ENCODE measurements at regions of chr11 and their contacts with region 1.

Region 1: DNA sequence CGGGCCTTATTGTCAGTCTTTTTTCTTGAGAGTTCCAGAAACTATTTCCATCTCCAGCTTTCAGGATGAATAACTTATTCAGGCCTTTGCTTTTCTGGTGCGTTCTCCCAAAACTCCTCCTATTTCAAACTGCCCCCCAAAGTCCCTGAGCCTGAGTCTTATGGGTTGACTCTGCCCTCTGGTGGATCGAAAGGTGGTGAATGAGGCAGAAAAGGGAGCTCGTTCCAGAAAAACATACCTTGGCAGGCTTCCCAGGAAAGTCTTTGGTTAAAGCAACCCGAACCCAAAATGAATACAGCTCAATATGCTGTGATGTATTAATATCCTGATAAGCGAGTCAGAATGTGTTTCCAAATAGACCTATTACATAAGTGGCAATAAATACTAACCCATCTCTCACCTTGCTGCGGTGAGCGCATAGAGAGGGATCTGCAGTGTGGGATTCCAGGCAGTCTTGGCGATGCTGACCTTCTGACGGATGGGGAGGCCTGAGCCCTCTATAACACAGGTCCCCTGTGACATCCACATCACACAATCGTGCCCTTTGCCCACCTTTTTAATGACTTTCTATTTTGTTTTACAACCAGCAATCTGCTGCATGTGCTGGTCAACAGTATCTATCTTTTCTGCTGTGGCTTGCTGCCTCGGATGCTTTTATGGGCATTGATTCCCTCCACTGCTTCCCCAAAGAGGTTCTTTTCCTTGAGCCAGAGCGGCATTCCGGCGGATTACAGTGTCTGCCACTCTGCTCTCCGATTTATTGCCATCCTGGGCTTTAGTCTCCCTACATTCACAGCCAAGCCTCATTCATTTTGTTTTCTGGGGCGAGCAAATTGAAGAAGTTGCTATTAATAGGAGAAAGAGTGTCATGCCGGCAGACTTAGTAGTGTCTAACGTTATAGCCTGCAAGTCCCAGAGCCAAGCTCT is 756.8 kb downstream of the NTM start:
- DNase-seq: peak; percentile 67
- H3K4me3 ChIP-seq: peak overlapping the region in 2 of 3 experiments; percentile 34 to 36
- H3K27ac ChIP-seq: peak overlapping the region; percentile 48
- H3K4me1 ChIP-seq: peaks cover 29% of the 10 kb centered on the region
- H3K27me3 ChIP-seq: no peaks in the 10 kb centered on the region
- CTCF ChIP-seq: peak; percentile 62 to 79

Region 2: GRCh38 chr11:131465746-131466145 is 661.5 kb before region 1 on chr11:
- CTCF ChIA-PET with region 1: no interaction called
- dilution Hi-C with region 1: no loop called
- in situ Hi-C with region 1: no loop called
- intact Hi-C with region 1: no loop called
- DNase-seq: no peak
- H3K4me3 ChIP-seq: no peak overlapping the region
- H3K27ac ChIP-seq: no peak overlapping the region
- H3K4me1 ChIP-seq: no peaks in the 10 kb centered on the region
- H3K27me3 ChIP-seq: no peaks in the 10 kb centered on the region
- CTCF ChIP-seq: no peak

Region 3: DNA sequence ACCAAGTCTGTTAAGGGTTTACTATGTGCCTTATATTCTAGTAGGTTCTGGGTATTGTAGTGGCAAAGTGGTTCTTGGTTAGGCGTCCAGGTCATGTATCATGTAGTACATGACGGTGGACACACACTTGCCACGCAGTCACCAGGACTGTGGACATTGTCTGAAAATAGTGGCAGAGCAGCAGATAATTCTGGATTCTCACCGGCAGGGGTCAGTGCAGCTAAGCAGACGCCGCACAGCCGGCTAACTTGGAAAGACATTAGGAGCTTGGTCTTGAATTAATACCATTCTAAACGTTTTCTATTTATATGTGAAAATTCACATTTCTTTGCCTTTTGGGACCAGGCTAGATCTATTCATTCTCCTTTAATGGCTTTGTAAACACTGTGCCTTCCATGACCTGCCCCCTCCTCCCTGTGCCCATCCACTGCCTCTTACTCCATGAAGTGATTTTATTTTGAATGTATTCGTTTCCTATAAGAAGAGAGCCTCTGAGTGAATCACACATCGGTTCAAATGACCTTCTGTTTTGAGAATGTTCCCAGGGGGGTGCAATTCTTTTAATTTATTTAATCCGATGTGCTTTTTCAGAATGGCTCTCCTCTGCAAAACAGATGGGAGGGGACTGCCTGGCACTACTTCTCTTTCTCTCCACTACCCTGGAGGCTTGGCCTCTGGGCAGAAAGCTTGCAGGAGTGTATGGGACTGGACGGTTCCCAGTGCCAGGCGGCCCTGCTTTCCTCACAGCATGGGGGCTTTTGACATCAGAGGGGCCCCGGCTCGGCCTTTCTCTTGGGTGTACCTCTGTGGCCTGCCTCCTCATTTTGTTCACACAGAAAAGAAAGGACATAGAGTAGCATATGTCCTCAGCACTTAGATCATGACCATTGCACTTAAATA is 378.8 kb before region 1 on chr11:
- CTCF ChIA-PET with region 1: interaction called, 9 read pairs
- dilution Hi-C with region 1: no loop called
- in situ Hi-C with region 1: no loop called
- intact Hi-C with region 1: loop called (anchors 1 kb)
- DNase-seq: peak; percentile 42
- H3K4me3 ChIP-seq: no peak overlapping the region
- H3K27ac ChIP-seq: no peak overlapping the region
- H3K4me1 ChIP-seq: peaks cover 6% of the 10 kb centered on the region
- H3K27me3 ChIP-seq: no peaks in the 10 kb centered on the region
- CTCF ChIP-seq: peak; percentile 85 to 92

Region 4: GRCh38 chr11:131759140-131759539 is 368.1 kb before region 1 on chr11:
- CTCF ChIA-PET with region 1: no interaction called
- dilution Hi-C with region 1: no loop called
- in situ Hi-C with region 1: no loop called
- intact Hi-C with region 1: no loop called
- DNase-seq: no peak
- H3K4me3 ChIP-seq: no peak overlapping the region
- H3K27ac ChIP-seq: no peak overlapping the region
- H3K4me1 ChIP-seq: no peaks in the 10 kb centered on the region
- H3K27me3 ChIP-seq: no peaks in the 10 kb centered on the region
- CTCF ChIP-seq: no peak

Region 5: DNA sequence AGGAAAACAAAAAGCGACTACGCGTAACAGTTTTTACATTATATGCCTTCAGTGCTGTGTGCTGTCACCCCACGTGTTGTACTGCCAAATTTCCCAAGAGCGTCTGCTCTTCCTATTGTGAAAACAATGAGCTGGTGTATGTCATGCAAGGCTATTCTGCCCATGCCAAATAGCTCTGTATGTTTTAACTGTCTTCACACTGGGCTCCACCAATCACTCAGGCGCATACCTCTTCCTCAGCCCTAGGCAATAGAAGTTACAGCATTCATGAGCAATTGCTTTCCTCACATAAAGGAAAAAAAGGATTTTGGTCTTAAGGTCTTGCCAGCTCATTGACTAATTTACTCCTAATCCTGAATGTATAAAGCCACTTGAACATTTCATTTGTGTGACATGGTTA is 150.0 kb before region 1 on chr11:
- CTCF ChIA-PET with region 1: interaction called, 5 read pairs
- dilution Hi-C with region 1: no loop called
- in situ Hi-C with region 1: no loop called
- intact Hi-C with region 1: loop called (anchors 1 kb)
- DNase-seq: peak; percentile 95
- H3K4me3 ChIP-seq: peak overlapping the region in 2 of 3 experiments; percentile 21 to 26
- H3K27ac ChIP-seq: peak overlapping the region; percentile 95
- H3K4me1 ChIP-seq: peaks cover 29% of the 10 kb centered on the region
- H3K27me3 ChIP-seq: no peaks in the 10 kb centered on the region
- CTCF ChIP-seq: no peak

Region 6: DNA sequence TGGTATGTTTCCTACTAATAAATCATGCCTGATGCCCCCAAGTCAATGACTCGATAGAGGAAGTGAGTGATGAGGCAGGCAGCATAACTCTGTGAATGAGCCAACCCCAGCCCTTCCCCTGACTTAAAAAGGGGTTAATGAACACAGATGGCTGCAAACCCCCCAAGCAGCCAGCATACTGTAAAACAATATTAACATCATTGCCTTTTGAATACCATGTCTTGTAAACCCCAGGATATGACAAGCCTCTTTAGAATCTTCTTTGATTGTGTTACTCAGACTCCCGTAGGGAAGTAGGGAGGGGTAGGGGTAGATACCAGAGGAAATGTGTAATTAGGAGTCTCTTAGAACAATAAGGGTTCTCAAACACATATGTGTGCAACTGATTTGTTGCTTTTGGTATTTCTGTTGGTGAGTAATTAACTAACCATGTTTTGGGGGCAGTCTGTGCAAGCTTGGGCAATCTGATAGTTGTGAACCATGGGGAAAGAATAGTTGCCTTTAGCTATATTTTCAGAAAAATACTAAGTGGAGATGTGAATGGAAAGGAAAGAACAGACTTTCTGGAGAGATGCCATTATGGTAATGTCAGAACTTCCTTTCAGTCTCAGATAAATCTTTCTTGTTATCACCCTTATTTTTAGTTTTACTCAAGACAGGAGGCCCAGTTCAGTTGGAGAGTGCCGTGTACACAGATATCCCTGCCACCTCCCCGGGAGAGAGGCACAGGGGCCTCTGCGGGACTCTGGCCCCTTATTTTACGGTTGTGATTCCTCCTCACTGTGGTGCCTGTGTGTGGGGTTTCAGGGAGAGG is 55.0 kb before region 1 on chr11:
- CTCF ChIA-PET with region 1: interaction called, 6 read pairs
- dilution Hi-C with region 1: no loop called
- in situ Hi-C with region 1: no loop called
- intact Hi-C with region 1: loop called (anchors 2 kb)
- DNase-seq: peak; percentile 97
- H3K4me3 ChIP-seq: no peak overlapping the region
- H3K27ac ChIP-seq: peak overlapping the region; percentile 99
- H3K4me1 ChIP-seq: peaks cover 56% of the 10 kb centered on the region
- H3K27me3 ChIP-seq: no peaks in the 10 kb centered on the region
- CTCF ChIP-seq: no peak

Region 7: GRCh38 chr11:132158093-132158492 is 30.9 kb after region 1 on chr11:
- CTCF ChIA-PET with region 1: interaction called, 4 read pairs
- dilution Hi-C with region 1: no loop called
- in situ Hi-C with region 1: no loop called
- intact Hi-C with region 1: loop called (anchors 1 kb)
- DNase-seq: peak; percentile 30
- H3K4me3 ChIP-seq: no peak overlapping the region
- H3K27ac ChIP-seq: no peak overlapping the region
- H3K4me1 ChIP-seq: peaks cover 16% of the 10 kb centered on the region
- H3K27me3 ChIP-seq: no peaks in the 10 kb centered on the region
- CTCF ChIP-seq: peak; percentile 49 to 73